Colonic mucosa (tissue), 4 donors: ENCODE measurements at regions of chr11 and their contacts with region 1.

Region 1: GRCh38 chr11:61129639-61130523 is 27.6 kb downstream of the CD5 start:
- DNase-seq: peak; percentile 93
- H3K4me3 ChIP-seq: peak overlapping the region; percentile 8
- H3K27ac ChIP-seq: peak overlapping the region; percentile 56
- H3K4me1 ChIP-seq: peaks cover 7% of the 10 kb centered on the region
- H3K27me3 ChIP-seq: no peaks in the 10 kb centered on the region
- CTCF ChIP-seq: peak; percentile 100

Region 2: GRCh38 chr11:60970369-60970774 is 159.5 kb before region 1 on chr11:
- intact Hi-C with region 1: loop called (anchors 2 kb)
- DNase-seq: peak; percentile 67
- H3K4me3 ChIP-seq: no peak overlapping the region
- H3K27ac ChIP-seq: no peak overlapping the region
- H3K4me1 ChIP-seq: no peaks in the 10 kb centered on the region
- H3K27me3 ChIP-seq: no peaks in the 10 kb centered on the region
- CTCF ChIP-seq: peak; percentile 88

Region 3: GRCh38 chr11:60982184-60982583 is 147.7 kb before region 1 on chr11:
- intact Hi-C with region 1: no loop called
- DNase-seq: no peak
- H3K4me3 ChIP-seq: no peak overlapping the region
- H3K27ac ChIP-seq: no peak overlapping the region
- H3K4me1 ChIP-seq: no peaks in the 10 kb centered on the region
- H3K27me3 ChIP-seq: no peaks in the 10 kb centered on the region
- CTCF ChIP-seq: no peak

Region 4: GRCh38 chr11:61187505-61188130 is 57.7 kb after region 1 on chr11:
- intact Hi-C with region 1: loop called (anchors 5 kb)
- DNase-seq: peak; percentile 81
- H3K4me3 ChIP-seq: no peak overlapping the region
- H3K27ac ChIP-seq: no peak overlapping the region
- H3K4me1 ChIP-seq: no peaks in the 10 kb centered on the region
- H3K27me3 ChIP-seq: no peaks in the 10 kb centered on the region
- CTCF ChIP-seq: peak; percentile 93